Adrenal gland (tissue), 19 donors: ENCODE measurements at regions of chr12 and their contacts with region 1.

Region 1: GRCh38 chr12:105705765-105706164 is 375.3 kb downstream of the C12orf75 start:
- DNase-seq: peak; percentile 43 to 78 (median 59)
- H3K4me3 ChIP-seq: no peak overlapping the region
- H3K27ac ChIP-seq: peak overlapping the region in 2 of 5 donors; percentile 0 to 36
- H3K4me1 ChIP-seq: peaks cover 0 to 8% of the 10 kb centered on the region in 2 donors
- H3K27me3 ChIP-seq: no peaks in the 10 kb centered on the region
- CTCF ChIP-seq: peak; percentile 57 to 83 (median 75)
- POLR2A ChIP-seq: no peak

Region 2: DNA sequence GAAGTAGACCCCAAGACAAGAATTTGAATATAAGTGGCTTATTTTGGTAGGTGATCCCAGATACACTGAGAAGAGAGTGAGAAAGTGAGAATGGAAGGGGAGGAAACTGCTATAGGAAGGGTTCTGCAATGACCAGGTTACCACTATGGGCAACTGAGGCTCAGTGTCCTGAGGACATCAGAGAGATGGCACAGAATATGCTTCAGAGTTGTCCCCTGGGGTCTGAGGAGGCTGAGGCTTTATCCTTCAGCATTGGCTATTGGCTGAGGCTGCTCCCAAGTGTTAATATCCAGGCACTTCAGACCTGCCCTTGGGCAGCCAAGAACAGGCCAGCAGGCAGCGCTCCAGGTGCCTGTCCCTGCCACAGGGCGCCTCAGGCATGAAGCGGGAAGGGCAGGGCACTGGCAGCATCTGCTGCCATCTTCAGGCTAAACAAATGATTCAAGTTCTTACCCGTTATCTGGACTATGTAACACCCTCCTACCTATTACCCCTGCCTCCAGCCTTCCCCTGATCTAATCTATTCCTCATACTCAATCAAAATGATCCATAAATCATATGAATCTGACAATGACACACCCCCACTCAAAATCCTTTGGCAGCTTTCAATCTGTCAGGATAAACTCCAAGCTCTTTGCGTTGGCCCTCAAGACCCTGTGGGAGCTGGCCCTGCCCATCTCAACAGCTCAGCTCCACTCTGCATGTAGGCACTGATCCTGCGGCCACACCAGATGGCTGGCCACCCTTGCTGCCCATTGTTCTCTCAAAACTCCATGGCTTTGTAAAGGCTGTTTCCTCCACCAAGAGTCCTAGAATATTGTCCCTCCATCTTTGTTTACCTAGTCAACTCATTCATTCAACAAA is 499.7 kb after region 1 on chr12:
- intact Hi-C with region 1: loop called in 1 of 2 experiments (anchors 10 kb)
- DNase-seq: peak; percentile 40 to 78 (median 73)
- H3K4me3 ChIP-seq: no peak overlapping the region
- H3K27ac ChIP-seq: no peak overlapping the region
- H3K4me1 ChIP-seq: no peaks in the 10 kb centered on the region
- H3K27me3 ChIP-seq: no peaks in the 10 kb centered on the region
- CTCF ChIP-seq: peak in 4 of 6 experiments; percentile 42 to 60 (median 54)
- POLR2A ChIP-seq: no peak